Posterior vena cava (tissue), 2 donors: ENCODE measurements at regions of chr22 and their contacts with region 1.

Region 1: GRCh38 chr22:45448431-45448830 is 34.9 kb downstream of the RIBC2 start:
- DNase-seq: peak; percentile 93

Region 2: DNA sequence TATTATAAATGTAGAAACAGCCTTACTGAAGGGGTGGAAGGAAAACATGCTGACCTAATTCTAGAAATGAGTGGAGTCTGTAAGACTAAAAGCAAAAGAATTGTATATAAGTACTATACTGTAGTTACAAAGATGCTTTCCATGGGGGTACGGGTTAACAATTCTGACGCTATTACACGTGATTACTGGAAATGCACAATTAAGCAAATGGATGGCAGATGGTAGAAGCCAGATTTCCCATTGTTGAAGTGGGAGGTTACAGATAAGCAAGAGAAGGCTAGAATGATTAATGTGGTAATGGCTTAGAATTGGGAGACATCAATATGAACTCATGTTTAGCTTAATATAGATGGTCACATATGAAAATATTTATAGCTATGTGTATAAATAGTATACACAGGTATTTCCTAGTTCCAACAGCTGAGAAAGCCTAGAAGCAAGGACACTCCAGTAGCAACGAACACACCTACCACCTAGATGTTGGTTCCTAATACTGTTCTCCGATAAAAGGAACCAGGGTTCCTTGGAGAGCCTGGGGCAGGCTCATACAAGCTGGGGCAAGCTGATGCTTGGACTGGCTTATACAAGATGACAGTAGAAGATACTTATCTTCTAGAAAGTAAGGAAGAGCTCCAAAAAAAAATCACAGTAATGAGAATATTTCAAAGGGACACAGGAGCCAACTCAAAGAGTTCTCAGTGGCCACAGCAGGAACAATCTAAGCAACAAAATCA is 48.6 kb before region 1 on chr22:
- intact Hi-C with region 1: no loop called
- DNase-seq: no peak

Region 3: DNA sequence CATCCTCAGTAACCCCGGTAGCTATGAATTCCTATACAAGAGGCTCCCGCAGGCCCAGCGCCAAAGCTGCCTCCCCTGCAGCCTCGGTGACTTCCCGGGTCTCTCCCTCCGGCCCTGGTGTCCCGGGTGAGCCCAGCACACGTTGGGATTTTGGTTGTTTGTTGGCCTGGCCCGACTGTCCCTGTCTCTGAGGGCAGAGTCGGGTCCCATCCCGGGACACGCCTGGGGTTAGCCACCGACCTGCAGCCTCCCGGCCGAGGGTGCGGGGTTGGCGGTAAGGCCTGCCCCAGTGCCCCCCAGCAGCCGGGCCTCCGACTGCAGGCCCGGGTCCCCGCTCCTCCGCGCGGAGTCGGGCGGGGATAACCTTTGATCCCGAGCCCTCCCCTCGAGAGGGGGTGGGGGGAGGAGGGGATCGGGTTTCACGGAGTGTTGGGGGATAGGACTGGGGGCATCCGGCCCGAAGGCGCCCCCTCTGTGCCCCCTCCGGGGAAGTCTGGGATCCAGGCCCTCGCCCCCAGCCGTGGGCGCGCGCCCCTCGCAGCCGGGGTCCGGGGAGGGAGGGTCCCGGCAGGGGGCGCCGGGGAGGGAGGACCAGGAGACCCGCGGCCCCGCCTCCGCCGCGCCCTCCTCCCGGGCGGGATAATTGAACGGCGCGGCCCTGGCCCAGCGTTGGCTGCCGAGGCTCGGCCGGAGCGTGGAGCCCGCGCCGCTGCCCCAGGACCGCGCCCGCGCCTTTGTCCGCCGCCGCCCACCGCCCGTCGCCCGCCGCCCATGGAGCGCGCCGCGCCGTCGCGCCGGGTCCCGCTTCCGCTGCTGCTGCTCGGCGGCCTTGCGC is 54.0 kb after region 1 on chr22 and contains the start of gene FBLN1:
- intact Hi-C with region 1: loop called in 1 of 2 experiments (anchors 5 kb)
- DNase-seq: peak; percentile 84
- total RNA-seq, gene FBLN1: 608 to 1,210 TPM